ENCODE measurements at regions of chr10 and their contacts with region 1.

Region 1: GRCh38 chr10:42875792-42876460 is 93.3 kb downstream of the BMS1 start:
- DNase-seq: peak in 1 of 2 donors; percentile 58
- ATAC-seq: peak in 2 of 4 donors; percentile 24 to 48
- H3K4me3 ChIP-seq: no peak overlapping the region
- H3K27ac ChIP-seq: no peak overlapping the region
- H3K4me1 ChIP-seq: no peaks in the 10 kb centered on the region
- H3K27me3 ChIP-seq: peaks cover 0 to 5% (median 4%) of the 10 kb centered on the region in 3 donors
- CTCF ChIP-seq: no peak

Region 2: GRCh38 chr10:42926843-42927242 is 50.9 kb after region 1 on chr10:
- intact Hi-C with region 1: loop called in 1 of 2 experiments (anchors 5 kb)
- DNase-seq: peak in 1 of 2 donors; percentile 29
- ATAC-seq: peak in 1 of 4 donors; percentile 39
- H3K4me3 ChIP-seq: no peak overlapping the region
- H3K27ac ChIP-seq: no peak overlapping the region
- H3K4me1 ChIP-seq: no peaks in the 10 kb centered on the region
- H3K27me3 ChIP-seq: peaks cover 0 to 9% (median 4%) of the 10 kb centered on the region in 3 donors
- CTCF ChIP-seq: no peak

Measured in psoas muscle (tissue), 8 donors.